ENCODE measurements at regions of chr16 and their contacts with region 1.

Region 1: DNA sequence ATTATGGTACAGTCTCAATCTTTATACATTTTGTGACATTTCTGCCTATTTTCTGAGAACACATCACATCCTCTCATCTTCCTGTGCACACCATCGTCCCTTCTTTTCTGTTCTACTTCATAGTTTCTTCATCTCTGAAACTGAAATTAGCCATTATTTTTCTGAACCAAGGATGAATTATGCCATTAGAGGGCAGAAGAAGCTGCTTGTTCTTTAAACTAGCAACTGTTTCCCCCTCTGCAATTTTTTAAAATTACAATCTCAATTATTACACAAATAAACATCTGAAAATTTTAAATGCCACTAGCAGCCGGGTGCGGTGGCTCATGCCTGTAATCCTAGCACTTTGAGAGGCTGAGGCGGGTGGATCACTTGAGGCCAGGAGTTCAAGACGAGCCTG is 41.3 kb downstream of the RBBP6 start:
- DNase-seq: peak; percentile 6
- H3K4me3 ChIP-seq: no peak overlapping the region
- H3K27ac ChIP-seq: no peak overlapping the region
- H3K4me1 ChIP-seq: peaks cover 2% of the 10 kb centered on the region
- H3K27me3 ChIP-seq: no peaks in the 10 kb centered on the region
- CTCF ChIP-seq: peak; percentile 15 to 52

Region 2: DNA sequence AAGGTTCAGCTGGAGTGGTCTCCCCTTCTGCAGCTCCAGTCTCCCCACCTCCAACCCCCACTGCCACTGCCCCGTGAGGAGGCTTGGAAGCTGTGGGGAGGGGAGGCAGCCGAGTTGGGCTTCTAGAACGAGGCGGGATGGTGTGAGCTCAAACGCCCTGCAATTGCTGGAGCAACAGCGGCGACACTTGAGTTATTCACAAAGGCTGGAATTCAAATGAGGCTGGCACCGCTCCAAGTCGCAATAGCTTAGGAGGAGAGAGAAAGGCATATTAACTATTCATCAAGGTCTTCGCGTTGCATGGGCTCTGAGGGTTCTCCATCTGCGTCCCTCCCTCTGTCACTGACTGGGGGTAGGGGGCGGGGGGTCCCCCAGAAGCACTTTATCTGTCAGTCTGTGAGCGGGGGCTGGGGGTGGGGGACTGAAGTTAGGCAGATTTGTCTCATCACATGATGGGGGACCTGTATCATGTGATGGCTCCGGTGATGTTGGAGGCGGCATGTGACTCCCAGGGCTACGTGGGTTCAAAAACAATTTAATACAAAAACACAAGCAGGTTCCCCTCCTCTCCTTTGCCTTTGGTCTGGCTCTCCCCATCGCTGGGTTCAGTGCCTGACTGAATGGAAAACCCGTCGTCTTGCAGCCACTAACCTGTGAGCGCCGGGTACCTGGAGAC is 29.2 kb after region 1 on chr16:
- CTCF ChIA-PET with region 1: no interaction called
- dilution Hi-C with region 1: no loop called
- in situ Hi-C with region 1: no loop called
- intact Hi-C with region 1: no loop called
- DNase-seq: peak; percentile 36
- H3K4me3 ChIP-seq: no peak overlapping the region
- H3K27ac ChIP-seq: no peak overlapping the region
- H3K4me1 ChIP-seq: peaks cover 5% of the 10 kb centered on the region
- H3K27me3 ChIP-seq: no peaks in the 10 kb centered on the region
- CTCF ChIP-seq: no peak

Region 3: GRCh38 chr16:24668481-24669061 is 87.9 kb after region 1 on chr16:
- CTCF ChIA-PET with region 1: no interaction called
- dilution Hi-C with region 1: no loop called
- in situ Hi-C with region 1: no loop called
- intact Hi-C with region 1: no loop called
- DNase-seq: peak; percentile 40
- H3K4me3 ChIP-seq: no peak overlapping the region
- H3K27ac ChIP-seq: peak overlapping the region; percentile 39
- H3K4me1 ChIP-seq: peaks cover 18% of the 10 kb centered on the region
- H3K27me3 ChIP-seq: no peaks in the 10 kb centered on the region
- CTCF ChIP-seq: no peak

Region 4: DNA sequence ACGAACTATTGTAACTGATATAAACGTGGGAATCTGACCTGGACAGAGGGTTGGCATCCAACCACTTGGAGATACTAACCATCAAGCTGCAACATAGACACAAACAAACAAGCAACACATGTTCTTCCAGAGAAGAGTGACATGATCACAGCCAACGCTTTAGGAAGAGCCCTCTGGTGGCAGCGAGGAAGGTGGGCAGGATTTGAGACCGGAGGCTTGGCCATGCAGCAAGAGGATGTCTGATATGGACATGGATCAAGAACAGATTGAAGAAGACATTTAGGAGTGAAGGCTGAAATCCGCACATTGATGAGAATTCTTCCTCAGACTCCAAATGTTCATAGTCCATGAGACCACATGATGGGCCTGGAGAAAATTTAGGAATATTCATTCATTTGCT is 108.5 kb after region 1 on chr16:
- CTCF ChIA-PET with region 1: no interaction called
- dilution Hi-C with region 1: no loop called
- in situ Hi-C with region 1: loop called in 1 of 2 experiments (anchors 25 kb)
- intact Hi-C with region 1: loop called (anchors 1 kb)
- DNase-seq: no peak
- H3K4me3 ChIP-seq: no peak overlapping the region
- H3K27ac ChIP-seq: no peak overlapping the region
- H3K4me1 ChIP-seq: peaks cover 11% of the 10 kb centered on the region
- H3K27me3 ChIP-seq: no peaks in the 10 kb centered on the region
- CTCF ChIP-seq: peak; percentile 49 to 53

Region 5: DNA sequence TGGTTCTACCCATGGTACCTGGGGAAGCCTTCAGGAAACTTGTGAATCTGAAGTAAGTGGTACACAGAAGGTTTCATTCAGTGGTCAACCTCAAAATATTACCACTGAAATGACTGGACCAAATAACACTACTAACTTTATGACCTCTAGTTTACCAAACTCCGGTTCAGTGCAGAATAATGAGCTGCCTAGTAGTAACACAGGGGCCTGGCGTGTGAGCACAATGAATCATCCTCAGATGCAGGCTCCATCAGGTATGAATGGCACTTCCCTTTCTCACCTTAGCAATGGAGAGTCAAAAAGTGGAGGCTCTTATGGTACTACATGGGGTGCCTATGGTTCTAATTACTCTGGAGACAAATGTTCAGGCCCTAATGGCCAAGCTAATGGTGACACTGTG is 209.2 kb after region 1 on chr16:
- CTCF ChIA-PET with region 1: no interaction called
- dilution Hi-C with region 1: no loop called
- in situ Hi-C with region 1: loop called in 1 of 2 experiments (anchors 10 kb)
- intact Hi-C with region 1: no loop called
- DNase-seq: peak; percentile 81
- H3K4me3 ChIP-seq: no peak overlapping the region
- H3K27ac ChIP-seq: no peak overlapping the region
- H3K4me1 ChIP-seq: peaks cover 11% of the 10 kb centered on the region
- H3K27me3 ChIP-seq: no peaks in the 10 kb centered on the region
- CTCF ChIP-seq: no peak